ENCODE measurements at regions of chr6 and their contacts with region 1.

Region 1: GRCh38 chr6:24283043-24283985 is 74.5 kb downstream of the DCDC2 start:
- DNase-seq: peak; percentile 78
- H3K4me3 ChIP-seq: peak overlapping the region in 1 of 2 experiments; percentile 40; a peak in 1 of 4 replicates
- H3K27ac ChIP-seq: no peak overlapping the region
- H3K4me1 ChIP-seq: peaks cover 0 to 7% of the 10 kb centered on the region in 2 experiments; a peak in 3 of 4 replicates
- H3K27me3 ChIP-seq: no peaks in the 10 kb centered on the region
- CTCF ChIP-seq: peak; percentile 69
- EP300 ChIP-seq: no peak
- RAD21 ChIP-seq: peak; percentile 64

Region 2: DNA sequence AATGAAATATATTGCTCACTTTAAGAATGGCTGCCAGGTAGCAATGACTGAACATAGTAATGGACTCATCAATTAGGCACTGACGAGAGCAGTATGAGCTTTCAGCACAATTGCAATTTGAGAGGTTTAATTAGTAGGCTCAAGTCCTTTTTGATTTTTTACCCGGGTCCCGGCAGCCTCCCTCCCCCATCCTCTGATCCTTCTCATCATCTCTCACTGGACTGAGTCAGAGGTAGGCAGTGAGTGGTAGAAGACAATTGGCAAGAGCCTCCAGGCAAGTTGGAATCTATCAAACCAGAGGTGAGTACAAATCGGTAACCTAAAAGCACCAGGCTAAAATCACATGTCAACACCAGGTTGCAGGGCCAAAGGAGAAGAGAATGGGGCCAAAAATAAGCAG is 33.4 kb before region 1 on chr6:
- CTCF ChIA-PET with region 1: interaction called, 10 read pairs
- POLR2A ChIA-PET with region 1: no interaction called
- DNase-seq: no peak
- H3K4me3 ChIP-seq: no peak overlapping the region
- H3K27ac ChIP-seq: no peak overlapping the region
- H3K4me1 ChIP-seq: no peaks in the 10 kb centered on the region
- H3K27me3 ChIP-seq: no peaks in the 10 kb centered on the region
- CTCF ChIP-seq: no peak
- EP300 ChIP-seq: no peak
- RAD21 ChIP-seq: no peak

Region 3: GRCh38 chr6:24296944-24297343 is 13.6 kb after region 1 on chr6:
- CTCF ChIA-PET with region 1: interaction called, 22 read pairs
- POLR2A ChIA-PET with region 1: no interaction called
- DNase-seq: no peak
- H3K4me3 ChIP-seq: no peak overlapping the region
- H3K27ac ChIP-seq: no peak overlapping the region
- H3K4me1 ChIP-seq: no peaks in the 10 kb centered on the region
- H3K27me3 ChIP-seq: no peaks in the 10 kb centered on the region
- CTCF ChIP-seq: no peak
- EP300 ChIP-seq: no peak
- RAD21 ChIP-seq: no peak

Region 4: GRCh38 chr6:24353861-24354260 is 70.5 kb after region 1 on chr6:
- CTCF ChIA-PET with region 1: interaction called, 25 read pairs
- POLR2A ChIA-PET with region 1: no interaction called
- DNase-seq: no peak
- H3K4me3 ChIP-seq: no peak overlapping the region
- H3K27ac ChIP-seq: no peak overlapping the region
- H3K4me1 ChIP-seq: no peaks in the 10 kb centered on the region; a peak in 1 of 4 replicates
- H3K27me3 ChIP-seq: no peaks in the 10 kb centered on the region
- CTCF ChIP-seq: no peak
- EP300 ChIP-seq: no peak
- RAD21 ChIP-seq: no peak

Region 5: DNA sequence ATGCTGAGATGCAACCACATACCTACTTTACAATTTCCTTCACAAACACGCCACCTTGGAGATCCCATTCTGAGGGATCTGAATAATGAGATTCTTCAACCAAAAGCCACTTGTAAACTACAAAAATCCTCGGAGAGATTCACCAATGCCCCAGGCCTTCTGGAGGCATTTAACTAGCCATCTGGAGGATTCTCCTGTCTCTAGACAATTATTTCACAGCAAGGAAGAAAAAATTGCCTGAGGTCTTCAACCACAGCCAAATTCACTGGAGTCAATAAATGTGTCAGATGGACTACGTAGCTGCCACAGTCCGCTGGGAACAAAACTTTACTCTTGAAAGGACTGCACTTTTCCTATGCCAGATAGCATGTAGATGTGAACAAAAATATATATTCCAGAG is 93.6 kb after region 1 on chr6:
- CTCF ChIA-PET with region 1: interaction called, 23 read pairs
- POLR2A ChIA-PET with region 1: no interaction called
- DNase-seq: peak; percentile 36
- H3K4me3 ChIP-seq: no peak overlapping the region
- H3K27ac ChIP-seq: no peak overlapping the region
- H3K4me1 ChIP-seq: peaks cover 0 to 2% of the 10 kb centered on the region in 2 experiments; a peak in 2 of 4 replicates
- H3K27me3 ChIP-seq: no peaks in the 10 kb centered on the region
- CTCF ChIP-seq: no peak
- EP300 ChIP-seq: no peak
- RAD21 ChIP-seq: no peak

Region 6: GRCh38 chr6:24394780-24395437 is 111.6 kb after region 1 on chr6:
- CTCF ChIA-PET with region 1: interaction called, 64 read pairs
- POLR2A ChIA-PET with region 1: interaction called, 8 read pairs
- DNase-seq: no peak
- H3K4me3 ChIP-seq: no peak overlapping the region
- H3K27ac ChIP-seq: no peak overlapping the region
- H3K4me1 ChIP-seq: no peaks in the 10 kb centered on the region
- H3K27me3 ChIP-seq: no peaks in the 10 kb centered on the region
- CTCF ChIP-seq: no peak
- EP300 ChIP-seq: no peak
- RAD21 ChIP-seq: no peak